Motor neuron (in vitro differentiated cells): ENCODE measurements at regions of chrX and their contacts with region 1.

Region 1: DNA sequence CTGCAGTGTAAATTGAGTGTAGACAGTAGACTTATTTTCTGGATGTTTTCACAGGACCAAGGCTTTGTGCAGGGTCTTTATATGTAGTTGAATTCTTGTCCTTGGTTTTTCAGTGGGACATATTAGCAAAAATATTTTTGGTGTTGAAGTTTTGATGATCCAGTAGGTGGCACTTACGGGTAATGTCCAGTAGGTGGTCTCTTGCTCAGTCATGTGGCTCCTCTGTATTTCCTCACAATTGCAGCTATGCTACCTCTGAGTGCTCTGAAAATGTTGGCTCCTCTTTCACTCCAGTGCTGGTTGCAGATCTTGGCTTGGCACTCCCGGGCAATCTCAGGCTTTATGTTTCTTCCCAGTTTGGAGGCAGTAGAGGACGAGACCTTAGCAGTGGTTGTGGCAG is 419.8 kb upstream of the AMOT start:
- ATAC-seq: peak in 1 of 8 experiments; percentile 37
- H3K4me3 ChIP-seq: no peak overlapping the region
- H3K27ac ChIP-seq: no peak overlapping the region
- H3K4me1 ChIP-seq: no peaks in the 10 kb centered on the region

Region 2: DNA sequence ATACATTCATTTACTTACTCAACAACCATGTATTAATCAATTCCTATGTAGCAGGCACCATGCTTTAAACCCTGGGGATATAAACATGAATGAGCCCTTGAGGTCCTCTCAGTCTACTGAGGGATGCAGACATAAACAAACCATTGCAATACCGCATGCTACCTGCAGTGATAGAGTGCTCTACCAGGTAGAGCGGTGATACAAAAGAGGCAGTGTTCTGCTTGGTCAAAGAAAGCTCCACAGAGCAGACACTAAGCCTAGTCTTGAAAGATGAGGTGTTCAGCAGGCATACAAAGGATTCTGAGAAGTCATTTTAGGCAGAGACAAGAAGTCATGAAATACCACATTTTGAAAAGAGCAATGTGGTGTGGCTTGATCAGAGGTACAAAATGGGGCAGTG is 392.9 kb before region 1 on chrX:
- in situ Hi-C with region 1: no loop called
- ATAC-seq: no peak
- H3K4me3 ChIP-seq: no peak overlapping the region
- H3K27ac ChIP-seq: no peak overlapping the region
- H3K4me1 ChIP-seq: no peaks in the 10 kb centered on the region

Region 3: GRCh38 chrX:113741744-113742143 is 481.3 kb after region 1 on chrX:
- in situ Hi-C with region 1: loop called in 1 of 9 experiments (anchors 25 kb)
- ATAC-seq: peak in 3 of 8 experiments; percentile 43 to 61 (median 53)
- H3K4me3 ChIP-seq: no peak overlapping the region
- H3K27ac ChIP-seq: no peak overlapping the region
- H3K4me1 ChIP-seq: no peaks in the 10 kb centered on the region